ENCODE measurements at regions of chr2 and their contacts with region 1.

Region 1: GRCh38 chr2:181466661-181467576 is 9.7 kb downstream of the ITGA4 start:
- H3K4me3 Mint-ChIP-seq: no peak overlapping the region
- H3K27ac Mint-ChIP-seq: no peak overlapping the region
- H3K4me1 Mint-ChIP-seq: peaks cover 31% of the 10 kb centered on the region
- H3K27me3 Mint-ChIP-seq: no peaks in the 10 kb centered on the region

Region 2: DNA sequence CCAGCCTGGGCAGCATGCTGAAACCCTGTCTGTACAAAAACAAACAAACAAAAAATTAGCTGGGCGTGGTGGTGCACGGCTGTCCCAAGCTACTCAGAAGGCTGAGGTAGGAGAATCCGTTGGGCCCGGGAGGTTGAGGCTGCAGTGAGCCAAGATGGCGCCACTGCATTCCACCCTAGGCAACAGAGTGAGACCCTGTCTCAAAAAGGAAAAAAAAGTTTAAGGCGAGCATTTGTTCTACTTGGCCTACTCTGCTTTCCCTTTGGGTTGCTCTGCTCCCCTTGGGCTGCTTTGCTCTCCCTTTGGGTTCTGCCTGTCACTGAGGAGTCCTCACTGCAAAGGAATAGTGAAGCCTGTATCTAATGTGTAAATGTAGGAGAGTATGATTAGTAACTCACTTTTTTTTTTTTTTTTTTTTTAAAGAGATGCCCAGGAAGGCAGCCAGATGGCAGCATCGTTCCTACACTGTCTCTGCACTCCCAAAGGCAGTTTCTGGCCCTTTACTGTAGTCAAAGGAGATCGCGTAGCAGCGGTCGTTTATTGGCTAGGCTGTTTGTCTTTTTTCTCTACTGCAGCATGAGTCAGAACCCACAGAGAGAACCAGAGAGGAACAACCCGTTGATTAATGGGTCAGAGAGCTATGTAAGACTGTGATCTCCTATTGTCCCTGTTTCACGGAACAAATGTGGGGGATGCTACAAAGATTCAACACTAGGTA is 1341.5 kb before region 1 on chr2:
- intact Hi-C with region 1: loop called (anchors 10 kb)
- H3K4me3 Mint-ChIP-seq: no peak overlapping the region
- H3K27ac Mint-ChIP-seq: no peak overlapping the region
- H3K4me1 Mint-ChIP-seq: no peaks in the 10 kb centered on the region
- H3K27me3 Mint-ChIP-seq: peaks cover 3% of the 10 kb centered on the region

Region 3: GRCh38 chr2:181077128-181077709 is 389.7 kb before region 1 on chr2:
- intact Hi-C with region 1: loop called (anchors 1 kb)
- H3K4me3 Mint-ChIP-seq: no peak overlapping the region
- H3K27ac Mint-ChIP-seq: no peak overlapping the region
- H3K4me1 Mint-ChIP-seq: peaks cover 15% of the 10 kb centered on the region
- H3K27me3 Mint-ChIP-seq: no peaks in the 10 kb centered on the region

Region 4: DNA sequence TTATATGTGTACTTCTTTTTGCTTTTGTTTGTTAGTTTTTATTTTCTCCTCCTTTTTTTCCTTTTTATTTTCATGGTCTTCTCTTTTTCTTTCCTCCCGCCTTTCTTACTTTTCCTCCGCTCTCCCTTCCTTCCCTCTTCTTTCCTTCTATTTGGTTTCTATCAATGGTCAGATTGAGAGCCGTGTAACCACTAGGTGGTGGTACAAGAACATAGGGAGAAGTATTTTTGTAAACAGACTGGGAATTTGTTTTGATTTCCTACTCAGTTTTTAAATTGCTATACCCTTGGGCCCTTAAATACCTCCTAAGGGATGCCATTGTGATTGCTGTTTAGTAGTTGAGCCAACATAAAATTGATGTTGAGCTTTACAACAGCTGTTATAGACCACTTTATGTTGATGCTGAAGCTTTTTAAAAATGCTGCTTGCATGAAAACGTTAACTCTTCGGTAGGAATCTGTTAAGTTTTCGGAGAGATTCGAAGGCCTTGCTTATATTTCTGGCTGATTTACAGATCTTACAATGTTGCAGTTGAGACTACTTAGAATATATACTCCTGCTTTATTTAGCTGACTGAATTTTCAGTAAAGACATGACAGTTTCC is 362.3 kb before region 1 on chr2:
- intact Hi-C with region 1: loop called (anchors 2 kb)
- H3K4me3 Mint-ChIP-seq: no peak overlapping the region
- H3K27ac Mint-ChIP-seq: no peak overlapping the region
- H3K4me1 Mint-ChIP-seq: peaks cover 14% of the 10 kb centered on the region
- H3K27me3 Mint-ChIP-seq: no peaks in the 10 kb centered on the region

Region 5: GRCh38 chr2:181305301-181306123 is 161.4 kb before region 1 on chr2:
- intact Hi-C with region 1: loop called (anchors 5 kb)
- H3K4me3 Mint-ChIP-seq: no peak overlapping the region
- H3K27ac Mint-ChIP-seq: peak overlapping the region; percentile 45
- H3K4me1 Mint-ChIP-seq: peaks cover 35% of the 10 kb centered on the region
- H3K27me3 Mint-ChIP-seq: no peaks in the 10 kb centered on the region

Region 6: GRCh38 chr2:181573140-181573736 is 106.3 kb after region 1 on chr2:
- intact Hi-C with region 1: no loop called
- H3K4me3 Mint-ChIP-seq: no peak overlapping the region
- H3K27ac Mint-ChIP-seq: no peak overlapping the region
- H3K4me1 Mint-ChIP-seq: no peaks in the 10 kb centered on the region
- H3K27me3 Mint-ChIP-seq: no peaks in the 10 kb centered on the region